CD8-positive, alpha-beta T cell (primary cell): ENCODE measurements at regions of chrX and their contacts with region 1.

Region 1: GRCh38 chrX:80876877-80877276 is 67.2 kb upstream of the BRWD3 start:
- DNase-seq: peak in 2 of 9 experiments; percentile 31 to 49
- ATAC-seq: no peak
- H3K4me3 ChIP-seq: no peak overlapping the region
- H3K4me3 Mint-ChIP-seq: no peak overlapping the region
- H3K27ac ChIP-seq: no peak overlapping the region
- H3K27ac Mint-ChIP-seq: no peak overlapping the region
- H3K4me1 ChIP-seq: no peaks in the 10 kb centered on the region
- H3K4me1 Mint-ChIP-seq: no peaks in the 10 kb centered on the region
- H3K27me3 ChIP-seq: no peaks in the 10 kb centered on the region
- H3K27me3 Mint-ChIP-seq: no peaks in the 10 kb centered on the region
- CTCF ChIP-seq: peak; percentile 38

Region 2: GRCh38 chrX:80229626-80230025 is 647.3 kb before region 1 on chrX:
- CTCF ChIA-PET with region 1: no interaction called
- POLR2A ChIA-PET with region 1: no interaction called
- intact Hi-C with region 1: no loop called
- DNase-seq: no peak
- ATAC-seq: no peak
- H3K4me3 ChIP-seq: no peak overlapping the region
- H3K4me3 Mint-ChIP-seq: no peak overlapping the region
- H3K27ac ChIP-seq: no peak overlapping the region
- H3K27ac Mint-ChIP-seq: no peak overlapping the region
- H3K4me1 ChIP-seq: no peaks in the 10 kb centered on the region
- H3K4me1 Mint-ChIP-seq: no peaks in the 10 kb centered on the region
- H3K27me3 ChIP-seq: no peaks in the 10 kb centered on the region
- H3K27me3 Mint-ChIP-seq: no peaks in the 10 kb centered on the region
- CTCF ChIP-seq: no peak

Region 3: GRCh38 chrX:81121513-81122382 is 244.9 kb after region 1 on chrX:
- CTCF ChIA-PET with region 1: no interaction called
- POLR2A ChIA-PET with region 1: no interaction called
- intact Hi-C with region 1: loop called in 1 of 2 experiments (anchors 5 kb)
- DNase-seq: peak; percentile 71 to 91 (median 84)
- ATAC-seq: peak; percentile 94
- H3K4me3 ChIP-seq: peak overlapping the region; percentile 71 to 82
- H3K4me3 Mint-ChIP-seq: peak overlapping the region; percentile 93
- H3K27ac ChIP-seq: peak overlapping the region in 1 of 2 experiments; percentile 39
- H3K27ac Mint-ChIP-seq: peak overlapping the region; percentile 46
- H3K4me1 ChIP-seq: peaks cover 4% of the 10 kb centered on the region
- H3K4me1 Mint-ChIP-seq: peaks cover 9% of the 10 kb centered on the region
- H3K27me3 ChIP-seq: no peaks in the 10 kb centered on the region
- H3K27me3 Mint-ChIP-seq: no peaks in the 10 kb centered on the region
- CTCF ChIP-seq: no peak

Region 4: GRCh38 chrX:81195712-81196111 is 318.8 kb after region 1 on chrX:
- CTCF ChIA-PET with region 1: no interaction called
- POLR2A ChIA-PET with region 1: no interaction called
- intact Hi-C with region 1: loop called in 1 of 2 experiments (anchors 5 kb)
- DNase-seq: peak; percentile 10 to 73 (median 57)
- ATAC-seq: peak; percentile 80
- H3K4me3 ChIP-seq: no peak overlapping the region
- H3K4me3 Mint-ChIP-seq: no peak overlapping the region
- H3K27ac ChIP-seq: no peak overlapping the region
- H3K27ac Mint-ChIP-seq: no peak overlapping the region
- H3K4me1 ChIP-seq: no peaks in the 10 kb centered on the region
- H3K4me1 Mint-ChIP-seq: peaks cover 13% of the 10 kb centered on the region
- H3K27me3 ChIP-seq: no peaks in the 10 kb centered on the region
- H3K27me3 Mint-ChIP-seq: no peaks in the 10 kb centered on the region
- CTCF ChIP-seq: peak; percentile 57

Region 5: DNA sequence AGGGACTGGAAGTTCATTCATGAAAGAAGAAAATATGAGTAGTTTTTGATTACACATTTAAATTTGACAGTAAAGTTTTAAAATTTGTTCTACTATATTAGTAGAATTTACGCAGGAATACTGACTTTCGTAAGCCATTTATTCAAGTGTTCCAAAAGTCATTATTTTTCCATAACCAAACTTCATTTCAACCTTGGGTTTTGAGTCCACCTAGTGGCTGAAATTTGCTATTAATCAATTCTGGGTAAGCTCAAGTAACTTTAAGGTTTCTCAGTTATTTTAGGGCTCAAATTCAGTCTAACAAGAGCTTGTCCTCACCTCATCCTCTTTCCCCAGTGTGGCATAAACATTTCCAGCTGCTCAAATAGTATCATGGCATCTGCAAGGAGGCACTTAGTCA is 500.5 kb after region 1 on chrX:
- CTCF ChIA-PET with region 1: interaction called, 3 read pairs
- POLR2A ChIA-PET with region 1: no interaction called
- intact Hi-C with region 1: loop called in 1 of 2 experiments (anchors 5 kb)
- DNase-seq: peak in 2 of 9 experiments; percentile 11 to 13
- ATAC-seq: no peak
- H3K4me3 ChIP-seq: no peak overlapping the region
- H3K4me3 Mint-ChIP-seq: no peak overlapping the region
- H3K27ac ChIP-seq: no peak overlapping the region
- H3K27ac Mint-ChIP-seq: no peak overlapping the region
- H3K4me1 ChIP-seq: no peaks in the 10 kb centered on the region
- H3K4me1 Mint-ChIP-seq: no peaks in the 10 kb centered on the region
- H3K27me3 ChIP-seq: no peaks in the 10 kb centered on the region
- H3K27me3 Mint-ChIP-seq: peaks cover 7% of the 10 kb centered on the region
- CTCF ChIP-seq: peak; percentile 38